Heart right ventricle (tissue), 16 donors: ENCODE measurements at regions of chr18 and their contacts with region 1.

Region 1: DNA sequence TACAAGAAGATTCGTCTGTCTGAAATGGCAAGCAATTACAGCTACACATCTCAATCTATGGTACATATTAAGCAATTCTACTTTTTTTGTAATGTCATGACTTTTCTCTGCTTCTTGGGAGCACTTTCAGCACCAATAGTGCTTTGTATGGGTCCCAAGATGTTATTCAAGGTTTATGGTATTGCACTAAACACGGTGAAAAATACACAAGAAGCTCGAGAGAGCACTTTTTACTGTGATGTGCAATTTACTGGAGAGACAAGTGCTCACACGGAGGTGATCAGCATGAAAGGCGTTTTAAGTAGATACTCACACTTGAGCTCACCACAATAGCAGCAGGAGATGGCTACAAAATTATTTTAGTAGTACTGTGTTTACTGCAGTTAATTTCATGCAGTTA is 783.6 kb downstream of the CBLN2 start:
- DNase-seq: no peak
- ATAC-seq: no peak
- H3K4me3 ChIP-seq: no peak overlapping the region
- H3K27ac ChIP-seq: no peak overlapping the region
- H3K4me1 ChIP-seq: no peaks in the 10 kb centered on the region
- H3K27me3 ChIP-seq: no peaks in the 10 kb centered on the region
- CTCF ChIP-seq: no peak

Region 2: GRCh38 chr18:71809711-71810110 is 49.2 kb after region 1 on chr18:
- intact Hi-C with region 1: loop called in 1 of 10 experiments (anchors 10 kb)
- DNase-seq: no peak
- ATAC-seq: no peak
- H3K4me3 ChIP-seq: no peak overlapping the region
- H3K27ac ChIP-seq: no peak overlapping the region
- H3K4me1 ChIP-seq: no peaks in the 10 kb centered on the region
- H3K27me3 ChIP-seq: no peaks in the 10 kb centered on the region
- CTCF ChIP-seq: no peak